ENCODE measurements at regions of chr7 and their contacts with region 1.

Region 1: DNA sequence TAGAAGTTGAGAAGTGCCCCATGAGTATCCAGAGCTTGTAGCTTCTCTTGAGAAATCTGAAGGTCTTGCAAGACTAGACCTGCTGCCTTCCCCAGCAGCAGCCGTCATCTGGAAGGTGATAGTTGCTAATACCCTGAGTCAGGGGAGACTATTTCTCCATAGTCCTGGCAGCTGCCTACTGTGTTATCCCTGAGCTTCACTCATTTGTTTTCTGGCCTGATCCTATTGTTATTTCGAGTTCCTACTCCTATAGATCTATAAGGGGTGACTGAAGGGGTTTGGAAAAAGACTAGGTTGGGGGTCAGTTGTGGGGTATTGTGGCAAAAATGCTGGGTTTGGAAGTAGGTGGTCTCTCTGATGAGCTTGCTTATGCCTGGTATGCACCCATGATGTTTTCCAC is 297.8 kb downstream of the CNTNAP2 start:
- DNase-seq: no peak
- ATAC-seq: peak; percentile 41
- H3K4me3 ChIP-seq: no peak overlapping the region
- H3K27ac ChIP-seq: peak overlapping the region; percentile 31; the same call in 1 of the 2 replicates
- H3K4me1 ChIP-seq: peaks cover 23% of the 10 kb centered on the region
- H3K27me3 ChIP-seq: no peaks in the 10 kb centered on the region
- CTCF ChIP-seq: no peak

Region 2: DNA sequence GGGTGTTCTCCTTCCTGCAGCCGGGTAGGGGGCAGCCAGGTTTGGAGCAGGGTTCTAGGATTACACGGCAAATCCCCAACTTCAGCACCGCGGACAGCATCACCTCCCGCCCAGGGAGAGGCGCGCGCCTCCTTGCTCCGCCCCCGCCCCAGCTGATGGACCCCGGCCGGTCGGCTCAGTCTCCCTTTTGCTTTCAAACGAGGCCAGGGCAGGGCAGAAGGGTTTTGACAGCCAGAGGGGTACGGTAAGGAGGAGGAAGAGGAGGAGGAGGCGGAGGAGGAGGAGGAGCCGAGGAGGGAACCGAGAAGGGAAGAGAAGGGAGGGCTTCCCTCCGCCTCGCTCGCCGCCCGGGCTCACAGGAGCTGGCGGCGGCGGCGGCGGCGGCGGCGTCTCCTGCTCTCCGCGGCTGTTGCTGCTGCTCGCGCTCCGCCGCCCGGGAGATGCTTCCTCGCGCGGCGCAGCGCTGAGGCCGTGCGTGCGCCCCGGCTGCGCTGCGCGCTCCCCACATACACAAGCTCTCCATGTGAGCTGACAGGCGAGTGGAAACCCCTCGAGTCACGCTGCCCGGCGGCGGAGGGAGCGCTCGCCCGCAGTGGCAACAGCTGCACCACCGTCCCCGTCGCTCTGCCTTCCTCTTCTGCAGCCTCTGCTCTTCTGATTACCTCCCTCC is 298.4 kb before region 1 on chr7:
- CTCF ChIA-PET with region 1: no interaction called
- POLR2A ChIA-PET with region 1: interaction called, 3 read pairs
- intact Hi-C with region 1: loop called (anchors 5 kb)
- DNase-seq: peak; percentile 46
- ATAC-seq: peak; percentile 70
- H3K4me3 ChIP-seq: peak overlapping the region; percentile 66
- H3K27ac ChIP-seq: no peak overlapping the region
- H3K4me1 ChIP-seq: no peaks in the 10 kb centered on the region
- H3K27me3 ChIP-seq: peaks cover 19% of the 10 kb centered on the region
- CTCF ChIP-seq: no peak

Region 3: DNA sequence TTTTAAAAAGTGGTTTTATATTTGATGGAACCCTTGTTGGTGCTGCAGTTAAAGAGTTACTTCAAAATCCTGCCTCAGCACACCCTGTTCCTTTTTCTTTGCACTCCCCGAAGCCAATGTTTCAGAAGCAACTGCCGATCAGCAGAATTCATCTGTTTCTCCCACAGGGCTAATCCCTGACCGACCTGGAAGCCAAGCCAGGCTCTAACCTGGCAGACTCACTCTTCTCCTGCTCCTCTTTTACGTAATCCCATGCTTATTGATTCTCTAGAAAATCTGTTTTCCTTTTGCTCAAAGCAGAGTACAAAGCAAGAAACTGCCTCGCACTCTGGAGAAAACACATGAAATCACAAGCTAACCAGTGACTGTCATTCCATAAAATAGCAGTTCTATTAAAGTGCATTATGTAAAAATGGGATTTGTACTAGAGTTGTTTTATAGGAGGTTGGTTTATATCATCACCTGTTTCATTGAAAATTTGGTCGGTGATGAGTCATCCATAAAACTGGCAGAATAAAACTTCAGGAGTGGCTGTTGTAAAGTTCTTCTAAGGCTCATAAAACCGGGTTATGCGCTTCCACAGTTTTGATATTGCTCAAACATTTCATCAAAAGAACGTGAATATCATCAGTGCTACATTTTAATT is 197.9 kb before region 1 on chr7:
- CTCF ChIA-PET with region 1: no interaction called
- POLR2A ChIA-PET with region 1: no interaction called
- intact Hi-C with region 1: loop called (anchors 2 kb)
- DNase-seq: peak; percentile 53
- ATAC-seq: peak; percentile 84
- H3K4me3 ChIP-seq: peak overlapping the region; percentile 48
- H3K27ac ChIP-seq: peak overlapping the region; percentile 53
- H3K4me1 ChIP-seq: peaks cover 13% of the 10 kb centered on the region; the same call in 1 of the 2 replicates
- H3K27me3 ChIP-seq: no peaks in the 10 kb centered on the region
- CTCF ChIP-seq: no peak

Region 4: GRCh38 chr7:146366938-146367337 is 47.4 kb before region 1 on chr7:
- CTCF ChIA-PET with region 1: no interaction called
- POLR2A ChIA-PET with region 1: no interaction called
- intact Hi-C with region 1: loop called (anchors 1 kb)
- DNase-seq: peak; percentile 70
- ATAC-seq: peak; percentile 99
- H3K4me3 ChIP-seq: no peak overlapping the region
- H3K27ac ChIP-seq: peak overlapping the region; percentile 34
- H3K4me1 ChIP-seq: peaks cover 5% of the 10 kb centered on the region; the same call in 1 of the 2 replicates
- H3K27me3 ChIP-seq: no peaks in the 10 kb centered on the region
- CTCF ChIP-seq: no peak

Region 5: DNA sequence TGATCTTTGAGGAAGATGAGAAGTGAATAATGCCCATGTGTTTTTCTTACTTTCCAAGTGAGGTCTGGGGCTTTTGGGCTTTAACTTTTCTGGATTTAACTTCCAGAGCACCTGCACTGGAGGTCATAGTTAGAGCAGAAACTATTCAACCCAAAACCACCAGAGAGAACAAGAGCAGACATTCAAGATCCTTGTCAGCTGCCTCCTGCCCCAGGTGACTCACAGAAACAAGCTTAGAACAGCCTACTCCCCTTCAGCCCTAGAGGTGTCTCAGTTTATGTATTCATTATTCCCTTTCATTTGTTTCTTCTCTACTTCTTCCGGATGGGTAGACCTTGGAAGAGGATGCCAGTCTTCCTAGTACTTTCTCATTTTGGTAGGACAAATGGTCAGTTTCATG is 27.2 kb before region 1 on chr7:
- CTCF ChIA-PET with region 1: no interaction called
- POLR2A ChIA-PET with region 1: no interaction called
- intact Hi-C with region 1: loop called (anchors 2 kb)
- DNase-seq: no peak
- ATAC-seq: no peak
- H3K4me3 ChIP-seq: no peak overlapping the region
- H3K27ac ChIP-seq: no peak overlapping the region
- H3K4me1 ChIP-seq: no peaks in the 10 kb centered on the region
- H3K27me3 ChIP-seq: no peaks in the 10 kb centered on the region
- CTCF ChIP-seq: no peak

Region 6: GRCh38 chr7:146701166-146701565 is 286.8 kb after region 1 on chr7:
- CTCF ChIA-PET with region 1: no interaction called
- POLR2A ChIA-PET with region 1: no interaction called
- intact Hi-C with region 1: loop called (anchors 5 kb)
- DNase-seq: no peak
- ATAC-seq: peak; percentile 49
- H3K4me3 ChIP-seq: no peak overlapping the region
- H3K27ac ChIP-seq: no peak overlapping the region
- H3K4me1 ChIP-seq: no peaks in the 10 kb centered on the region
- H3K27me3 ChIP-seq: no peaks in the 10 kb centered on the region
- CTCF ChIP-seq: no peak

Region 7: DNA sequence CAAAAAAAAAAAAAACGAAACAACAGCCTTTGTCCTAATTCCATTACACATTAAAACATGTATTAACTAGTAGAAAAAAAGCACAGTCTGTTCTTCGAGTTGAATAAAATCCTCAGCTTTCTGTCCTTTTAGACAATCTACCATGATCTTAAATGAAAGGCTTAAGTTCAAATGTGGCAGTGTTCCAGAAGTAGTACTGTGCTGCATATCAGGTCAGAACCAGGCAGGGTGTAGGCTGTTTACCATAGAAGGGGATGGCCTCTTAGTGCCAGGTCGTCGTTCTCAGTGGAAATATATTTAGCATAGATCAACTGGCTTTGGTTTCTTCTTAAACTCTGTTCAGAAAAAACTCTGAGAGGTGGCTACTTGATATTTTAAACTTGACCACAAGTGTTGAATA is 314.2 kb after region 1 on chr7:
- CTCF ChIA-PET with region 1: no interaction called
- POLR2A ChIA-PET with region 1: no interaction called
- intact Hi-C with region 1: loop called (anchors 2 kb)
- DNase-seq: no peak
- ATAC-seq: no peak
- H3K4me3 ChIP-seq: no peak overlapping the region
- H3K27ac ChIP-seq: no peak overlapping the region
- H3K4me1 ChIP-seq: peaks cover 11% of the 10 kb centered on the region
- H3K27me3 ChIP-seq: no peaks in the 10 kb centered on the region
- CTCF ChIP-seq: no peak

Measured in PC-3 (cell line).